ENCODE measurements at regions of chr1 and their contacts with region 1.

Region 1: GRCh38 chr1:160006312-160006940 is 25.4 kb downstream of the PIGM start:
- DNase-seq: peak; percentile 76
- H3K4me3 ChIP-seq: no peak overlapping the region
- H3K27ac ChIP-seq: no peak overlapping the region
- H3K4me1 ChIP-seq: no peaks in the 10 kb centered on the region
- H3K27me3 ChIP-seq: no peaks in the 10 kb centered on the region
- CTCF ChIP-seq: peak; percentile 22 to 81 (median 76)
- EP300 ChIP-seq: no peak
- POLR2A ChIP-seq: no peak

Region 2: DNA sequence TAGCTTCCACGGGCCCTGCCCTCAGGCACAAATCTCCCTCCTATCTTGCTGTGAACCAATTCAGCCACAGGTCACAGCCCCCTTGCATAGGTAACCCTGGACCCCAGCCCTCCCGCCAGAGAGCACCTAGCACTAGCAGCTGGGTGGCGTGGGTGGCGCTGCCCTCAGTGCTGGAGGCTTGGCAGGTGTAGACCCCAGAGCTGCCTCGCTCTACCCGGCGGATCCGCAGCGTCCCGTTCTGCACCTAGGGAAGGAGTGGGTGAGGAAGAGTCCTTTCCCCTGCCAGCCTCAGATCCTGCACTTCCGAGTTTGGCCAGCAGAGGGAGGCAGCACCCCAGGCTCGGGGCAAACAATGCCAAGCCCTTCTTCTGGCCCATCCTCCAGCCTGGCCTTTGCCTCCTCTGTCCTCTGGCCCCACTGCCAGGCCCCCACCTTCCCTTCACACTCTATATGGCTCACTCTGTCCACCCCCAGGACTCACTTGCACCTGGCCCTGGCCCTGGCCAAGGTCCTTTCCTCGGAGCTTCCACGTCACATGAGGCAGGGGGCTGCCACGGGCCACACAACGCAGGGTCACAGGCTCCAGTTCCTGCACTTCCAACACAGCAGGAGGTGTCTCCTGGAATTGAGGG is 70.0 kb before region 1 on chr1:
- intact Hi-C with region 1: loop called (anchors 1 kb)
- DNase-seq: peak; percentile 81
- H3K4me3 ChIP-seq: no peak overlapping the region
- H3K27ac ChIP-seq: no peak overlapping the region
- H3K4me1 ChIP-seq: peaks cover 0 to 11% (median 6%) of the 10 kb centered on the region in 4 donors
- H3K27me3 ChIP-seq: no peaks in the 10 kb centered on the region
- CTCF ChIP-seq: peak; percentile 93 to 99 (median 98)
- EP300 ChIP-seq: no peak
- POLR2A ChIP-seq: no peak

Region 3: GRCh38 chr1:160186246-160186645 is 179.8 kb after region 1 on chr1:
- intact Hi-C with region 1: no loop called
- DNase-seq: no peak
- H3K4me3 ChIP-seq: no peak overlapping the region
- H3K27ac ChIP-seq: no peak overlapping the region
- H3K4me1 ChIP-seq: peaks cover 0 to 22% (median 17%) of the 10 kb centered on the region in 4 donors
- H3K27me3 ChIP-seq: no peaks in the 10 kb centered on the region
- CTCF ChIP-seq: no peak
- EP300 ChIP-seq: no peak
- POLR2A ChIP-seq: no peak